ENCODE measurements at regions of chr6 and their contacts with region 1.

Region 1: GRCh38 chr6:313087-313486 is 20.8 kb downstream of the DUSP22 start:
- DNase-seq: peak in 2 of 3 donors; percentile 69 to 78
- H3K4me3 ChIP-seq: no peak overlapping the region
- H3K27ac ChIP-seq: no peak overlapping the region
- H3K4me1 ChIP-seq: peaks cover 4 to 31% (median 16%) of the 10 kb centered on the region in 4 experiments
- H3K27me3 ChIP-seq: no peaks in the 10 kb centered on the region

Region 2: DNA sequence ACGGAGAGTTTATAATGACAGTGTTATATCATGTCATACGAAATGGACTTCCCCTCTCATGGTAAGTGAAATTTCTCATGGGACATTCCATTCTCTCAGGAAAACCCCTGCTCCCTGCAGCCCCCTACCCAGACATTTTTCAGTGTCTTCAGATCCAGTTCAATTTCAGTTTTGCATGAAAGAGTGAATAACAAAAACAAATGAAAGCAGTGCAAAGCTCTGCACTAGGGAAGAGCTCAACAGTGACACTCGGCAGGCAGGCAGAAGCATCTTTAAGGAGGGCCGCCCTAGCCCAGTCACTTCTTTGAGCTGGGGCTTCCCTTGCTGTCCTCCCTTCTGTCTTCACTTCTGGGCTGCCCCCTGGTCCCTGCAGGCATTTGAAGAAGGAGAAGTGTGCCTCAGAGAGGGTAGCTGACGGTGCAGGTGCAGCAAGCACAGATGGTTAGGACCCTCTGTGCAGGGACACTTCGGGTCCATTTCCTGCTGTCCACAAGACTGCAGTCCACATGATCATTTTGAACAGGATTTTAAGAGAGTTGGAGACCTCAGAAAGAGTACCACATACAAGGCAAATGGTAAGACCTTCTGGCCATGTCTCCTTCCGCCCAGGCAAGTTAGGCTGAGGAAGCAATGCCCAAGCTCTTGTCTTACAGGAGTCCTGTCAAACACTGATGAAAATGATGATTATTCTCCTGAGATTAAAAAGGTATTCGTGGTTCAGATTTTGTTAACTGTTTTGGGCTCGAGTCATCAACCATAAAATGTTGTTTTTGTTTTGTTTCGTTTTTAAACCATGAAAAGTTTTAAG is 26.2 kb before region 1 on chr6:
- CTCF ChIA-PET with region 1: no interaction called
- POLR2A ChIA-PET with region 1: no interaction called
- DNase-seq: no peak
- H3K4me3 ChIP-seq: no peak overlapping the region
- H3K27ac ChIP-seq: no peak overlapping the region
- H3K4me1 ChIP-seq: peaks cover 0 to 35% (median 24%) of the 10 kb centered on the region in 4 experiments
- H3K27me3 ChIP-seq: no peaks in the 10 kb centered on the region

Region 3: DNA sequence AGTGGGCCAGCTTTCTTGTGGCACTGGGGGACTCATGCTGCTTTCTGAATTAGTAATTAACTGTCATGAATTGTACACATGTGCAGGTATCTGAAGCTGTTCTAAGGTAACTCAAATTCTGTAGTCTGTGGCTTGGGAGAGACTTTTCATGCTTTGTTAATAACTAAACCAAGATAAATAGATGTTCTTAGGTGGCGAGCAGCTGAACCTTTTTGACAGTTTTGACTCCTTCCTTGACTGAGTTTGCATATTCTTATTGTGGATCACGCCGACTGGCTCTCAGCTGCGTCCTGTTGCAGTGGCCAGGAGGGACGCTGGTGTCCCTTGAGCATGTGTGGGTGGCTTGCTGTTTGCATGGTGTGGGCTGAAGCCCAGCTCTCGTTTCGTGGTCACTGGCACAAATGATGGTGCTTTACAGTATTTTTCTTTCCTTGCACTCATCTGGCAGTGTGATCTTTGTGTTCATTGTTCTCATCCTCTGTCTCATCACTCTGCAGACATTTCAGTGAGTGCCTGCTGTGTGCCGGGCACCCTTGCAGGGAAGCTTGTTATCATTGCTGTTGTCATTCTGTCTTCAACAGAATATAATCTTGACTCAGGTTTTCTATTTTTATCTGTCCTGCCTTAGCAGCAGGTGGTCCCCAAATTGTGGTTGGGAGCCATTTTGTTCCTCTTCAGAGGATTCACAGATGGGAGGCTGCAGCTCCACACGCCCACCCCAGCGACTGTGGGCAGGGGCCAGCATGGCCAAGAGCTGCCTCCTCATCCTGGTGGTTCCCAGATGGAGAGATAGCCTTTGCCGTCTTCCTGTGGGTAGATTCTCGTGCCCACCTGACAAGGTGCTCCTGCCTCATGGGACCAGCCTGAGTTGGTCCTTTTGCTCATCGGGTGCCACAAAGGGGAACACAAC is 18.8 kb after region 1 on chr6:
- CTCF ChIA-PET with region 1: interaction called, 10 read pairs
- POLR2A ChIA-PET with region 1: no interaction called
- DNase-seq: no peak
- H3K4me3 ChIP-seq: no peak overlapping the region
- H3K27ac ChIP-seq: no peak overlapping the region
- H3K4me1 ChIP-seq: peaks cover 3 to 32% (median 19%) of the 10 kb centered on the region in 4 experiments
- H3K27me3 ChIP-seq: no peaks in the 10 kb centered on the region

Measured in common myeloid progenitor, CD34-positive (primary cell).